ENCODE measurements at regions of chr11 and their contacts with region 1.

Region 1: DNA sequence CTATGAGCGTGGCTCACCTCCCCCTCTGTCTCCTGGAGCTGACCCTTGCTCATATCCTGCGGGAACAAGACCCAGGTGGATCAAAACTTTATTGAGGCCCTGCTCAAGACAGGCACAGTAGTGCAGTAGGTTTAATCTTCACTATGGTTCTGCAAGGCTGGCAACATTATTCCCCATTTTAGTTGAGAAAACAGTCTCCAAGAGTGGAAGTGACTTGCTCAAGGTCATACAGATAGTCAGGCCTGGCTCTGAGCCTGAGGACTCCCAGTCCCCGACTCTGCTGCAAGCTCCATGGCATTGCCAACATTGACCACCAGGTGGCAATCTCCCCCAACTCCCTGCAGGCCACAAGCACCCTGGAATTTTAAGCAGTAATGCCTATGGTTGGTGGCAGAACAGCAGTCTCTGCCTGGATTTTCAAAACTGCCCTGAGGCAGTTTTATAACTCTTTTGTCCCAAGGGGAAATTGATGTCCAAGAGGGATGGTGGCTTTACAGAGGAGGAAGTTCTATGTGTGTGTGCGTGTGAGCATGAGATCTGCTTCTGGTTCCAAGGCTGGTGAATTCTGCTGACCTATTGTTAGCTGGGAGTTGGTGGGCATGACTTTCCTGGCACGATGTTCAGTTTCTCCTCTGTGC is 34.1 kb downstream of the NEU3 start:
- DNase-seq: peak; percentile 59 to 69 (median 62)
- H3K4me3 ChIP-seq: no peak overlapping the region
- H3K4me3 Mint-ChIP-seq: no peak overlapping the region
- H3K27ac ChIP-seq: no peak overlapping the region
- H3K27ac Mint-ChIP-seq: peak overlapping the region in 1 of 7 donors; percentile 10
- H3K4me1 ChIP-seq: no peaks in the 10 kb centered on the region
- H3K4me1 Mint-ChIP-seq: no peaks in the 10 kb centered on the region
- H3K27me3 ChIP-seq: no peaks in the 10 kb centered on the region
- H3K27me3 Mint-ChIP-seq: peaks cover 0 to 1% of the 10 kb centered on the region in 2 donors

Region 2: DNA sequence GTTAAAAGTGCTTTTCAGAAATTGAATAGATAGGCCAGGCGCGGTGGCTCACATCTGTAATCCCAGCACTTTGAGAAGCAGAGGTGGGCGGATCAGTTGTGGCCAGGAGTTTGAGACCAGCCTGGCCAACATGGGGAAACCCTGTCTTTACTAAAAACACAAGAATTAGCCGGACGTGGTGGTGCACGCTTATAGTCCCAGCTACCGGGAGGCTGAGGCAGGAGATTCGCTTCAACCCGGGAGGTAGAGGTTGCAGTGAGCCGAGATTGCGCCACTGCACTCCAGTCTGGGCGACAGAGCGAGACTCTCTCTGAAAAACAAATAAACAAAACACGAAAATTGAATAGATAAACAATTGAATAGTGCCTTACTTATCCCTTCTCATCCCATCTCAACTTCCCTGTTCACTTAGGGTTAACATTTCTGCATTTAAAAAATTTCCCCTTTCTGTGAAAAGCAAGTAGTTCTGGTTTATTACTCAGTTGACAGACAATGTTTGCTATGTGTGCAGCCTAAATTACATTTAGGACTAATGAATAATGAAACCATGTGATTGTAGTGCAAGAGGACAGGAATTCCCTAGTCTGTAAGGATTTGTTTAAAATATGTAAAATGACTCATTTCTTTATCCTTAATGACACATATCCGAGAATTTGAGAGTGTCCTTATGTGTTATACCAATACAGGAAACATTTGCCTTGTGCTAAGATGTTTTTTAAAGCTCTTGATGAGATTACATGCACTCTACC is 268.2 kb before region 1 on chr11:
- CTCF ChIA-PET with region 1: no interaction called
- POLR2A ChIA-PET with region 1: no interaction called
- intact Hi-C with region 1: no loop called
- DNase-seq: no peak
- H3K4me3 ChIP-seq: no peak overlapping the region
- H3K4me3 Mint-ChIP-seq: peak overlapping the region in 2 of 8 donors; percentile 21 to 31
- H3K27ac ChIP-seq: no peak overlapping the region
- H3K27ac Mint-ChIP-seq: peak overlapping the region in 1 of 7 donors; percentile 13
- H3K4me1 ChIP-seq: peaks cover 35% of the 10 kb centered on the region
- H3K4me1 Mint-ChIP-seq: peaks cover 30 to 46% (median 40%) of the 10 kb centered on the region in 4 donors
- H3K27me3 ChIP-seq: no peaks in the 10 kb centered on the region
- H3K27me3 Mint-ChIP-seq: no peaks in the 10 kb centered on the region

Region 3: DNA sequence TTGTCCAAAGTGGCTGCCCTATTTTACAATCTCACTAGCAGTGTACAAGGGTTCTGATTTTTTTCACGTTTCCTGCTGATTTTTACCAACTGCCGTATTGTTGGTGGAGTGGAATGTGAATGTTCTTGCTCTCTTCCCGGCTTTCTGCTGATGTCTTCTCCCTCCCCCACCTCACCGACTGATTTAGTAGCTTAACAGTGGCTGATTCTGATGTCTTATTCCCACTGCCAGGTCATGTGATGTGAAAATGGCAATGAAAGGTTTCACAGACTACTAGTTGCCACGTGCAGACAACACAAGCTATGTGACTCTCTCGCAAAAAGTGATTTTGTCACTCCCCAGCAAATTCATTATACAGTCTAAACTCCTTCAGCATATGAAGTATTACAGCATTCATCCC is 51.5 kb before region 1 on chr11:
- CTCF ChIA-PET with region 1: no interaction called
- POLR2A ChIA-PET with region 1: no interaction called
- intact Hi-C with region 1: no loop called
- DNase-seq: no peak
- H3K4me3 ChIP-seq: no peak overlapping the region
- H3K4me3 Mint-ChIP-seq: no peak overlapping the region
- H3K27ac ChIP-seq: no peak overlapping the region
- H3K27ac Mint-ChIP-seq: peak overlapping the region in 1 of 7 donors; percentile 65
- H3K4me1 ChIP-seq: no peaks in the 10 kb centered on the region
- H3K4me1 Mint-ChIP-seq: peaks cover 1 to 11% (median 7%) of the 10 kb centered on the region in 4 donors
- H3K27me3 ChIP-seq: no peaks in the 10 kb centered on the region
- H3K27me3 Mint-ChIP-seq: no peaks in the 10 kb centered on the region

Region 4: DNA sequence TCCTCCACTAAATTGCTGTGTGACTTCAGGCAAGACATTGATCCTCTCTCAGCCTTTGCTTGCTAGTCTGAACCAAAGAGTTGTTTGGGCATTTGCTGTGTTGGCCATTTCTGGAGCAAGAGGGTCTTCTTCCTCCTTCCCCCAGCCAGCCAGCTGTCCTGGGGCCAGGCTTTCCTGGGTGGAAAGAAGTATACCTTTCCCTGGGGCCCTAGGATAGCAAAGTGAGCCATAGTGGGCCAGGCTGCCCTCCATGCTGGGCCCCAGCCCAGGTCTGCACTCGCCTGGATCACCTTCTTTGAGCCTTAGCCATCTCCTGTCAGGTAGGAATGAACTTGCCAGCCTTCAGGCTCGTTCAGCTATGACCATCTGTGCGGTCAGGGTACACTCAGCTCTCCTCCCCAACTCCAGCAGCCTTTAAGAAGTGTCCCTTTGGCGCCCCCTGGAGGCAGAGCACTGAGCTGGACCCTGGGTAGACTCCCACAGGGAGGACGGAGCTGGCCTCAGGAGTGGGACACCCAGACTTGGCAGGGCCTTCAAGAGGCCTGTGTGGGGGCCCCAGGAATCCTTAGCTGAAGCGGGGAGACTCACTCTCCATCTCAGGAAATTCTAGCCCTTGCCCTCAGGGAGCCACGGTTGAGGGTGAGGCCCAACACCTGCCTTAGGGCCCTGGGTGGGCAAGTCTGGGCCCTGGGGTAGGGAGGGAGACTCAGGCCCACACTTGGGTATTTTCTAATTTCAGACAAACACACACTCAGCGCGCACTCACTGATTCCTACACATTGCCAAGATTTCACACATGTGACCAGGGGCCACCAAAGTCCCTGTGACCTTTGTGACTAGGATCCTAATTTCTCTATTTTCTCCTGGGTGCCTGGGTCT is 182.0 kb after region 1 on chr11:
- CTCF ChIA-PET with region 1: interaction called, 16 read pairs
- POLR2A ChIA-PET with region 1: no interaction called
- intact Hi-C with region 1: no loop called
- DNase-seq: peak; percentile 61 to 75 (median 68)
- H3K4me3 ChIP-seq: no peak overlapping the region
- H3K4me3 Mint-ChIP-seq: no peak overlapping the region
- H3K27ac ChIP-seq: no peak overlapping the region
- H3K27ac Mint-ChIP-seq: no peak overlapping the region
- H3K4me1 ChIP-seq: no peaks in the 10 kb centered on the region
- H3K4me1 Mint-ChIP-seq: no peaks in the 10 kb centered on the region
- H3K27me3 ChIP-seq: no peaks in the 10 kb centered on the region
- H3K27me3 Mint-ChIP-seq: peaks cover 3 to 7% of the 10 kb centered on the region in 2 donors

Region 5: DNA sequence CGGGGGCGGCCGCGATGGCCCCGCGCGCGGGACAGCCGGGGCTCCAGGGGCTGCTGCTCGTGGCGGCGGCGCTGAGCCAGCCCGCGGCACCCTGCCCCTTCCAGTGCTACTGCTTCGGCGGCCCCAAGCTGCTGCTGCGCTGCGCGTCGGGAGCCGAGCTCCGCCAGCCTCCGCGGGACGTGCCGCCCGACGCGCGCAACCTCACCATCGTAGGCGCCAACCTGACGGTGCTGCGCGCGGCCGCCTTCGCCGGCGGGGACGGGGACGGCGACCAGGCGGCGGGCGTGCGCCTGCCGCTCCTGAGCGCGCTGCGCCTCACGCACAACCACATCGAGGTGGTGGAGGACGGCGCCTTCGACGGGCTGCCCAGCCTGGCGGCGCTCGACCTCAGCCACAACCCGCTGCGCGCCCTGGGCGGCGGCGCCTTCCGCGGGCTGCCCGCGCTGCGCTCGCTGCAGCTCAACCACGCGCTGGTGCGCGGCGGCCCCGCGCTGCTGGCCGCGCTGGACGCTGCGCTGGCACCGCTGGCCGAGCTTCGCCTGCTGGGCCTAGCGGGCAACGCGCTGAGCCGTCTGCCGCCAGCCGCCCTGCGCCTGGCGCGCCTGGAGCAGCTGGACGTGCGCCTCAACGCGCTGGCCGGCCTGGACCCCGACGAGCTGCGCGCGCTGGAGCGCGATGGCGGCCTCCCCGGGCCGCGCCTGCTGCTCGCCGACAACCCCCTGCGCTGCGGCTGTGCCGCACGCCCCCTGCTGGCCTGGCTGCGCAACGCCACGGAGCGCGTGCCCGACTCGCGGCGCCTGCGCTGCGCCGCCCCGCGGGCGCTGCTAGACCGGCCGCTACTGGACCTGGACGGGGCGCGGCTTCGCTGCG is 218.4 kb after region 1 on chr11:
- CTCF ChIA-PET with region 1: interaction called, 13 read pairs
- POLR2A ChIA-PET with region 1: no interaction called
- intact Hi-C with region 1: no loop called
- DNase-seq: peak; percentile 76 to 90 (median 86)
- H3K4me3 ChIP-seq: peak overlapping the region in 1 of 2 donors; percentile 47
- H3K4me3 Mint-ChIP-seq: peak overlapping the region in 7 of 8 donors; percentile 67 to 82 (median 73)
- H3K27ac ChIP-seq: no peak overlapping the region
- H3K27ac Mint-ChIP-seq: peak overlapping the region in 1 of 7 donors; percentile 87
- H3K4me1 ChIP-seq: peaks cover 14% of the 10 kb centered on the region
- H3K4me1 Mint-ChIP-seq: peaks cover 1 to 16% (median 5%) of the 10 kb centered on the region in 4 donors
- H3K27me3 ChIP-seq: peaks cover 16% of the 10 kb centered on the region
- H3K27me3 Mint-ChIP-seq: peaks cover 24 to 27% of the 10 kb centered on the region in 2 donors

Region 6: DNA sequence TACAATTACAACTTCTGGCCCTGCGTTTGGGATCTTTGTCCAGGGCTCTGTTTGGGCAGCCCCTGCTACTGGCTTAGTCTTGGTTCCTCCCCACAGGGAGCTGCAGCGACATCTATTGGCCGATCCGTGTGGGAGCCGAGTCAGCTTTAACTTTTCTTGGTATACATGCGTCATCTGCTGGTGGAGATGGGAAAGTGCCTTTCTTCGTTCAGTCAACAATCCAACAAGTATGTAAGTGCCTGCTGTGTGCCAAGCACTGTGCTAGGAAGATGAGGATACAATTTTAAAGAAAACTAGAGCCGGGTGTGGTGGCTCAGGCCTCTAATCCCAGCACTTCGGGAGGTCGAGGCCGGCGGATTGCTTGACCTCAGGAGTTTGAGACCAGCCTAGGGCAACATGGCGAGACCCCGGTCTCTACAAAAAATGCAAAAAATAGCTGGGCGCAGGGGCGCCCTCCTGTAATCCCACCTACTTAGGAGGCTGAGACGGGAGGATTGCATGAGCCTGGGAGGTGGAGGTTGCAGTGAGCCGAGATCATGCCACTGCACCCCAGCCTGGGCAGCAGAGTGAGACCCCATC is 225.9 kb after region 1 on chr11:
- CTCF ChIA-PET with region 1: interaction called, 41 read pairs
- POLR2A ChIA-PET with region 1: interaction called, 3 read pairs
- intact Hi-C with region 1: no loop called
- DNase-seq: peak; percentile 81 to 87 (median 84)
- H3K4me3 ChIP-seq: no peak overlapping the region
- H3K4me3 Mint-ChIP-seq: no peak overlapping the region
- H3K27ac ChIP-seq: no peak overlapping the region
- H3K27ac Mint-ChIP-seq: peak overlapping the region in 1 of 7 donors; percentile 47
- H3K4me1 ChIP-seq: no peaks in the 10 kb centered on the region
- H3K4me1 Mint-ChIP-seq: peaks cover 0 to 3% (median 1%) of the 10 kb centered on the region in 4 donors
- H3K27me3 ChIP-seq: no peaks in the 10 kb centered on the region
- H3K27me3 Mint-ChIP-seq: peaks cover 10 to 14% of the 10 kb centered on the region in 2 donors

Region 7: DNA sequence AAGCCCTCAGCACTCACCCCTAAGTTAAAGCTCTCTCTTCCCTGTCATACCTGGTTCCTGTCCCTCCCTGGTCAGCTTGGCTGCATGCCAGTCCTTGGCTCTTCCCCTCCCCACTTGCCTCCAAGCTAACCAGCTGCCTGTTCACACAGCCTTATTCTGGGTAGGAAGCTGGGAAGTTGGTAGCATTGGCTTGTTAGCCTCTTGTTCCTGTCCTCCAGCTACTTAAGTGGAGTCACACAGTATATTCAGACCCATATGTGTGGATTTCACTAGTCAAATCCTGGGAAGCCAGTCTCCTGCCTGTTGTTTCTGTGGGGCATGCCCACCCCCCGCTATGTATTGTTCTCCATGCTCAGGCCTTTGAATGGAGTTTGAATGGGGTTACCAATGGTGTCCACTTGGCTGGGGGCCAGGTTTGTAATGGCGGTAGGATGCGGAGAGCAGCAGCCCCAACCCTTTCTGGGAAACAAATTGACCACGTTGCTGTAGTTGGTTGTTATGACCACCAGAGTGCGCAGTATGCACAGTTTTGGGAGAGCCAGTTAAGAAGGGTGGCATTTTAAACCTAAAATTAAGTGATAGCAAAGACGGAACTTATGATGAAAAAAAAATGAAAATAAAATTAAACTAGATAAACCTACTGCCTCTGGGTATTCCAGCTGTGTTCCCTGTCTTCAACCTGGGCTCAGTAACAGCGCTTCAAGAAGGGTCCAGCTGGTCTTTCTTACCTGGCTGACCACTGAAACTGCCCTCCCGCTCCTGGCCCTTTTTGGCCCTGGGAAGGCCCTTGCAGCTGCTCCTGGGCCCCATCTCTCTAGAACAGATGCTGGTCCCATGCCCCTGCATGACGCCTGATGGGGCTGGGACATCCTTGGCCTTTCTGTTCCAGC is 365.8 kb after region 1 on chr11:
- CTCF ChIA-PET with region 1: no interaction called
- POLR2A ChIA-PET with region 1: no interaction called
- intact Hi-C with region 1: no loop called
- DNase-seq: peak; percentile 69 to 76 (median 74)
- H3K4me3 ChIP-seq: no peak overlapping the region
- H3K4me3 Mint-ChIP-seq: no peak overlapping the region
- H3K27ac ChIP-seq: no peak overlapping the region
- H3K27ac Mint-ChIP-seq: no peak overlapping the region
- H3K4me1 ChIP-seq: peaks cover 17% of the 10 kb centered on the region
- H3K4me1 Mint-ChIP-seq: peaks cover 4 to 13% (median 7%) of the 10 kb centered on the region in 4 donors
- H3K27me3 ChIP-seq: no peaks in the 10 kb centered on the region
- H3K27me3 Mint-ChIP-seq: peaks cover 4% of the 10 kb centered on the region in 2 donors

Measured in CD4-positive, alpha-beta memory T cell (primary cell).